HAP-1 (cell line): ENCODE measurements at regions of chr16 and their contacts with region 1.

Region 1: GRCh38 chr16:31873556-31874365 is at the start of gene ZNF267:
- DNase-seq: peak; percentile 92 to 96
- H3K4me3 ChIP-seq: peak within 1 kb of the TSS; percentile 97
- H3K4me1 ChIP-seq: peaks cover 26% of the 10 kb centered on the region
- H3K27me3 ChIP-seq: peaks cover 7% of the 10 kb centered on the region; the same call in 1 of the 2 replicates

Region 2: DNA sequence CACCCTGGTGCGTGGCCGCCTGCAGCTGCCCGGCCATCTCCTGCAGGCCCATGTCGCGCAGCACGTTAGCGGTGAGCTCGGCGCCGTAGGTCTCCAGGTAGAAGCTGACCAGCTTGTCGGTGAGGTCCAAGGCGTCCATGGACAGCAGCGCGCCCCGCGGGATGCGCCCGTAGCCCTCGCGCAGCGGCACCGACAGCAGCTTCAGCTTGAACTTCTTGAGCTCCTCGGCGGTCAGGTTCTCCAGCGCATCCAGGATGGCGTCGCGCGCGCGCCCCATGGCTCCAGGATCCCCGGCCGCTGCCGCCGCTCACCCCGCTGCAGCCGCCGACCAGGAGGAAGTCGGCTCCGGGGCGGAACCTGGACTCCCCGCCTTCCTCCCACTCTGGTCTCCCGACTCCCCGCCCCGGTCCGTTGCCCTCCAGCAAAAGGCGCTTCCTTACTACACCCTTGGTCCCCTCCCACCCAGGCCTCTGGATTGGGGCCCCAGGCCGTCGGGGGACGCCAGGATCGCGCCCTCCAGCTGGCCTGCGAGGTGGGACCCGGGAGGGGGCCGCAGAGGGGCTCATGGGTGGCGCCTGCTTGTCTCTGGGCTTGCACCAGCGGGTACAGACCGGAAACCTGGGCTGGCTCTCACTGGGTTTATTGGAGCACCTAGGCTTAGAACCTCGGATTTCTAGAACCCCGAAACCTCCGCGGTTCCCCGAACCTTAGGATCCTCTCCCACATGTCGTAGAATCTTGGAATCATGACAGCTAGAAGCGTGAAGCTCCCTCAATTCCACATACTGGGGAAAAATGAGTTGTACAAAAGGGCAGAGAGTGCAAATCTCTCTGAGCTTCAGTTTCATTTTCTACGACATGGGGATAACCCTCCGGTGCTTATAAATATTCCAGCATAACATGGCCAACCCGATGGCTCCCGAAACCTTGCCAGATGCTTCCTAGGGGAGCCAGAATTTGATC is 671.1 kb before region 1 on chr16 and contains the start of gene PYCARD:
- in situ Hi-C with region 1: loop called (anchors 25 kb)
- DNase-seq: peak in 1 of 2 experiments; percentile 62
- H3K4me3 ChIP-seq: peak within 1 kb of the TSS; percentile 33
- H3K4me1 ChIP-seq: no peaks in the 10 kb centered on the region; the same call in 1 of the 2 replicates
- H3K27me3 ChIP-seq: peaks cover 10% of the 10 kb centered on the region; the same call in 1 of the 2 replicates

Region 3: DNA sequence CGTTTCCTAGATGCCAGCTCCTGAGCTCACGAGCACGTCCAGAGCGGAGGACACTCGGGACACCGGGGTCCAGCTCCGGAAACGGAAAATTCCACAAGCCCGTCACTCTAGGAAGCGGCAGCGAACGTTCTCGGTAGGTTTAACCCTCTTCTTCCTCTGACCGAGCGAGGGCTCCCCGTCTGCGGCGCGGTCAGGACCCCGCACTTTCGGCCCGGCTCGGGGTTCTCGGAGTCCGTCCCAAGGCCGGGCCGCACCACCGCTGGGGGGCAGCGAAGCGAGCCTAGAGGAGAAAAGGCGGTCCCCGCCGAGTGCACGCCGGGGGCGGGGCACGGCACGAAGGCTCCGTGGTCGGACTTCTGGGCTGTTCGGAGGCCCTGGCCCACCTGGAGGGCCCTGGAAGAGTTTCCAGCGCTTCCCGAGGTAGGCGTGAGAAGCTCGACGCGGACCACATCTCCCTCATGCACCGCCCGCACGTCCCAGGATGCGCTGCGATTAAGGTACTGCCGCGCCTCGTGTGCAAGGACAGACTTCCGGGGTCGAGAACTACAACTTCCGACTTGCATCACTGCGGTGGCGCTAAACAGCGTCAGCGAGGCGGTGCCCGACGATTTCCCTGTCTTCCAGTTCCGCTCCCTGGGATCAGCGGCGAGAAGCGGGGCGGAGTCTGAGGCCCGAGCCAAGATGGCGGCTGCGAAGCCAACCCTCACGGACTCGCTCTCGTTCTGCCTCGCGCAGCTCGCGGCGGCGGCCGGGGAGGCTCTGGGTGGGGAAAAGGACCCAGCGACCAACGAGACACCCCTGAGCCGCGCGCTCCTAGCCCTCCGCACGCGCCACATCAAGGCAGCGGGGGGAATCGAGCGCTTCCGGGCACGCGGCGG is 414.7 kb before region 1 on chr16 and contains the start of gene ARMC5:
- in situ Hi-C with region 1: loop called (anchors 10 kb)
- DNase-seq: peak; percentile 96 to 97
- H3K4me3 ChIP-seq: peak within 1 kb of the TSS; percentile 92
- H3K4me1 ChIP-seq: peaks cover 31% of the 10 kb centered on the region
- H3K27me3 ChIP-seq: no peaks in the 10 kb centered on the region